OCI-LY7 (cell line): ENCODE measurements at regions of chr13 and their contacts with region 1.

Region 1: GRCh38 chr13:99258210-99258860 is at the start of gene GPR18:
- DNase-seq: peak; percentile 66
- H3K4me3 ChIP-seq: peak within 1 kb of the TSS; percentile 76
- H3K27ac ChIP-seq: peak within 1 kb of the TSS; percentile 97
- H3K4me1 ChIP-seq: peaks cover 64% of the 10 kb centered on the region
- CTCF ChIP-seq: no peak
- total RNA-seq, gene GPR18: 6.6 and 13.7 TPM in 2 replicates

Region 2: GRCh38 chr13:99200432-99201167 is 57.7 kb before region 1 on chr13 and contains the start of gene UBAC2:
- CTCF ChIA-PET with region 1: interaction called, 3 read pairs
- POLR2A ChIA-PET with region 1: interaction called, 28 read pairs
- intact Hi-C with region 1: loop called (anchors 1 kb)
- DNase-seq: peak; percentile 92
- H3K4me3 ChIP-seq: peak within 1 kb of the TSS; percentile 87
- H3K27ac ChIP-seq: peak within 1 kb of the TSS; percentile 82
- H3K4me1 ChIP-seq: peaks cover 50% of the 10 kb centered on the region
- CTCF ChIP-seq: no peak
- total RNA-seq, gene UBAC2: 26.8 and 33.4 TPM in 2 replicates

Region 3: GRCh38 chr13:99228737-99229691 is 29.3 kb before region 1 on chr13:
- CTCF ChIA-PET with region 1: interaction called, 4 read pairs
- POLR2A ChIA-PET with region 1: interaction called, 51 read pairs
- intact Hi-C with region 1: loop called (anchors 1 kb)
- DNase-seq: peak; percentile 95
- H3K4me3 ChIP-seq: peak overlapping the region; percentile 58
- H3K27ac ChIP-seq: peak overlapping the region; percentile 97
- H3K4me1 ChIP-seq: peaks cover 85% of the 10 kb centered on the region
- CTCF ChIP-seq: no peak

Region 4: GRCh38 chr13:99237981-99238662 is 20.2 kb before region 1 on chr13:
- CTCF ChIA-PET with region 1: no interaction called
- POLR2A ChIA-PET with region 1: interaction called, 51 read pairs
- intact Hi-C with region 1: loop called (anchors 2 kb)
- DNase-seq: no peak
- H3K4me3 ChIP-seq: peak overlapping the region; percentile 34
- H3K27ac ChIP-seq: peak overlapping the region; percentile 46
- H3K4me1 ChIP-seq: peaks cover 36% of the 10 kb centered on the region
- CTCF ChIP-seq: no peak

Region 5: DNA sequence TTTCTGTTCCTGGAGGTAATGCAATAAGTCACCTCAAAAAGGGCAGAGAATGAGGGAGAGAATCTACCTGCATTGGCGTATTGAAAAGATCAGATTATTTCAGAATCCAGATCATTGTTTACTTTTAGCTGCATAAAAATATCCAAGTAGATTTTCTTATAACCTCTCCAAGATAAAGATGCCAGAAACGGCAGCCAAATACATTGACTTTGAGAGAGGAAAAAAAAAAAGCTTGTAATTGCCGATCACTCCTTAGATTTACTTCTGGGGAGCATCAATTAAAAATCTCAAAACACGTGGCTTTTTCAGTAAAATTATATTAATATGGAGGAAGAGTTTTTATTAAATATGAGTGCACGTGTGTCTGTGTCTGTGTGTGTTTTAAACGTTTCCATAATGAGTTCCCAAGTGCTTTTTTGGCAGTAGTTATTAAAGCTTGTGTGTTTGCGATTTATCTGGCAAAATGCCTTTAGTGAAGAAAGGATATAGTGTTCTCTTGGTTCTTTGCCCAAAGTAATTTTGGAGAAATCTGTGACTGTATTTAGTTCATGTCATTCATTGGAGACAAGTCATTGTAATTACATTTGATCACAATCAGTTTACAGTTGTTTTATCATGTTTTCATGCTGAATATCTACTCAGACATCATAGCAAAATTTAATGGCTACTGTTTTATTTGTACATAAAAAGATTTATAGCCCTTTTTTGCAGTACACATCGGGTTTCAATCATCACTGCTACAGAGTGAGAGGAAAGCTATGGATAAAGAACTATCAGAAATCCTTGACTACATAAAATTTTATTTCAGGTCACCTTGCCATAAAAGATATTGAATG is 419.0 kb after region 1 on chr13:
- CTCF ChIA-PET with region 1: no interaction called
- POLR2A ChIA-PET with region 1: no interaction called
- intact Hi-C with region 1: no loop called
- DNase-seq: no peak
- H3K4me3 ChIP-seq: no peak overlapping the region
- H3K27ac ChIP-seq: no peak overlapping the region
- H3K4me1 ChIP-seq: no peaks in the 10 kb centered on the region
- CTCF ChIP-seq: no peak